ENCODE measurements at regions of chr4 and their contacts with region 1.

Region 1: GRCh38 chr4:128863312-128864075 is 54.0 kb downstream of the JADE1 start:
- H3K4me3 Mint-ChIP-seq: no peak overlapping the region
- H3K27ac Mint-ChIP-seq: no peak overlapping the region
- H3K4me1 Mint-ChIP-seq: peaks cover 28% of the 10 kb centered on the region
- H3K27me3 Mint-ChIP-seq: no peaks in the 10 kb centered on the region

Region 2: DNA sequence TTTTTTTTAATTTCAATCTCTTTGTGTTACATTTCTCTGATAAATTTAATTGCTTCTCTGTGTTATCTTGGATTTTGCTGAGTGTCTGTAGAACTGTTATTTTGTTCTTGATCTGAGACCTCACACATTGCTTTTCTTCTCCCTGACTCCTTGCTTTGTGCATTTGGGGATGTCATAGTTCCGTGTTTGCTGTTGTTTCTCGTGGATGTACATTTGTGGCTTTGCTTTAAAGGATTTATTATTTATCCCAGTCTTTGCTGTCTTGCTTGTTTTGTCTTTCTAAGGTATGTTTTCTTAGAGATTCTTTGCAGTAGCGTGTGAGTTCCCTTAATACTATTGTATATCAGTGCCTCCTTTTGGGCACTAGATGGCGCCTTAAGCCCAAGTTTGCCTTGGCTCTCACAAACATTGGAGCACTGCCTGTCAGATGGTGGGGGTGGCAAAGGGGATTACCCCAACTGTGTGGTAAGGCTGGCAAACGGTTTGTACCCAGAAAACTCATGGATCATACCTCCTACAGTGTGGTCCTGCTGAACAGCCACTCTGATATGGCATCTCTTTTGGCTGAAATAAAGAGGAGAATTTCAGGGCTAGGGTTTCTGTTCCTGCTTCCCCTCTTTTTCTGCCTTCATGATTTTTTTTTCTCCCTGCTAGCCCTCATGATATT is 672.2 kb before region 1 on chr4:
- intact Hi-C with region 1: loop called (anchors 2 kb)
- H3K4me3 Mint-ChIP-seq: no peak overlapping the region
- H3K27ac Mint-ChIP-seq: no peak overlapping the region
- H3K4me1 Mint-ChIP-seq: peaks cover 13% of the 10 kb centered on the region
- H3K27me3 Mint-ChIP-seq: no peaks in the 10 kb centered on the region

Region 3: DNA sequence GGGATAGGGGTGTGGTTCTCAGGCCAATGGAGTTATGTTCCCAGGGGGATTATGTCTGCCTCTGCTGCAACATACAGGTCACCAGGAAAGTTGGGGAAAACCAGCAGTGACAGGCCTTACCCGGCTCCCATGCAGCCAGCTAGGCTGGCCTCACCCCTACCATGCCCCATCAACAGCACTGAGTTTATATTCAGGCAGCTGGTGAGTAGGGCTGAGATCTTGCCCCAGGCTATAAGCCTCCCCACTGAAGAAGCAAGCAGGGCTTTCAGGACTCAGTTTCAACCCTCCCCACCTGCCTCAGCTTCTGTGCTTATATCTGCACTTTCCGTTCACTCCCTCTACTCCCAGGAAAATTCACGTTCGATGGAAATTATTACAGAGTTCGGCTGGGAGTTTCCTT is 453.5 kb before region 1 on chr4:
- intact Hi-C with region 1: no loop called
- H3K4me3 Mint-ChIP-seq: no peak overlapping the region
- H3K27ac Mint-ChIP-seq: no peak overlapping the region
- H3K4me1 Mint-ChIP-seq: no peaks in the 10 kb centered on the region
- H3K27me3 Mint-ChIP-seq: no peaks in the 10 kb centered on the region

Region 4: DNA sequence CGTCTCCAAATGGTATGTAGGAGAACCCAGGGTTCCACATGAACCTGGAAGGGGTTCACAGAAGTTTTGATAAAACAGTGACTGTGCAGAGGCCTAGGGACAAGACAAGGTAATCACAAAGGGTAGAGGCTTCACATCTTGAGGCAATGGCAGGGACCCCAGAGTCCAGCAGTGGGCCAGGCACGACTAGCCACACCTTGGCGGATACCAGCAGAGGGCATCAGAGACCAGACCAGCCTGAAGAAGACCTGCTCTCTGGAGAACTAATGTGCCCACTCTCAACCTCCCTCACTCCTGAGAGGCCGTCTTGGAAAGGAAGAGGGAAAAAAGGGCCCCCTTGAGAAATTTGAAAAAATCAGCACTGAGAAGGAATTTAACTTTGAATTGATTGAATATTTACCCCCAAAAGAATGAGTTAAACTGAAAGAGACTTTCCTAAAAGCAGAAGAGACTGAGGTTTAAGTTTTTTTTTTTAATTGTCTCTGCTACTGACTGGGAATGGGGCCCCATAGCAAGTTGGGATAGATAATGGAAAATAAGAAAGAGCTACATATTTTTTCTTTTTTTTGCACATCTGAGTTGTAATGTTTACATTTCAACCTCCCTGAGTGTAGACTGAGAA is 297.8 kb before region 1 on chr4:
- intact Hi-C with region 1: loop called (anchors 5 kb)
- H3K4me3 Mint-ChIP-seq: no peak overlapping the region
- H3K27ac Mint-ChIP-seq: peak overlapping the region; percentile 55
- H3K4me1 Mint-ChIP-seq: peaks cover 73% of the 10 kb centered on the region
- H3K27me3 Mint-ChIP-seq: no peaks in the 10 kb centered on the region

Region 5: DNA sequence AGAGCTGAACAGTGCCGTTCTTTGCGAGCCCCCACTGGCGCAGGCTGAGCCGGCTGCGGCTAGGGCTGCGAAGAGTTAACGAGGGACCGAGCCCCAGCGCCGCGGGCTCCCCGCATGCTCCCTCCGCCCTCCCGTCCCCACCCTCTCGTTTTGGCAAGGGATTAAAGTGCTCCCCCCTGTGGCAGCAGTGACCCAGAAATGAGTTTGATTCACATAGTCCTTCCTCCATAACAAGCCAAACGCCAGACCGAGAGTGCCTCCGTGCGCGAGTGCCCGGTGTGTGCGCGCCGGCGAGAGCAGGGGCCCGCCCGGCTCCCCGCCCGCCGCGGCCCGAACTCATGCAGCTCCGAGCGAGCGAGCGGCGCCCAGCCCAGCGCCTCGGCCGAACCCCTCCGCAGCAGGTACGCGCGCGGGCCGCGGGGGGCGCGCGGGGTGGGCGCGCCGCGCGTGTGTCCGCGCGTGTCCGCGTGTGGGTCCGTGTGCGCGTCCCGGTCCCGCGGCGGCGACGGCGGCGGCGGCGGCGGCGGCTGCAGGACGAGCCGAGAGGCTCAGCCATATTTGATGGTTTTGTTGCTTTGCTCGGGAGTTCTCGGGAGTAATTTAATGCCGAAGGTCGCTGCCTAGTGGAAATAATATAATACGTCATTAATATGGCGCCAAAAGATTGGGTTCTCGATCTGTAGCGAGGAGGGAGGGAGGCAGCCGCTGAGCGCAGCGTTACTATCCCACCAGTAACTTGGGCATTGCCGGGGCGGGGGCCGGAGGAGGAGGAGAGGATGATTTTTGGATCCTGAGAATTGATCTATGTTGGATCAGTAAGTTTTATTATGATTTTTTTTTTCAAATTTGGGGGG is 53.8 kb before region 1 on chr4 and contains the start of gene JADE1:
- intact Hi-C with region 1: loop called (anchors 1 kb)
- H3K4me3 Mint-ChIP-seq: peak within 1 kb of the TSS; percentile 89
- H3K27ac Mint-ChIP-seq: peak within 1 kb of the TSS; percentile 92
- H3K4me1 Mint-ChIP-seq: peaks cover 9% of the 10 kb centered on the region
- H3K27me3 Mint-ChIP-seq: peaks cover 3% of the 10 kb centered on the region

Region 6: GRCh38 chr4:129384974-129385373 is 521.5 kb after region 1 on chr4:
- intact Hi-C with region 1: no loop called
- H3K4me3 Mint-ChIP-seq: no peak overlapping the region
- H3K27ac Mint-ChIP-seq: no peak overlapping the region
- H3K4me1 Mint-ChIP-seq: no peaks in the 10 kb centered on the region
- H3K27me3 Mint-ChIP-seq: peaks cover 3% of the 10 kb centered on the region